Ovary (tissue), 10 donors: ENCODE measurements at regions of chr5 and their contacts with region 1.

Region 1: GRCh38 chr5:171418316-171418981 is 998 bp upstream of the FGF18 start:
- DNase-seq: peak; percentile 72 to 88 (median 76)
- H3K4me3 ChIP-seq: peak overlapping the region; percentile 25
- H3K27ac ChIP-seq: no peak overlapping the region
- H3K4me1 ChIP-seq: peaks cover 6% of the 10 kb centered on the region
- H3K27me3 ChIP-seq: peaks cover 2% of the 10 kb centered on the region
- CTCF ChIP-seq: peak; percentile 68 to 95 (median 91)
- EP300 ChIP-seq: no peak
- POLR2A ChIP-seq: no peak

Region 2: DNA sequence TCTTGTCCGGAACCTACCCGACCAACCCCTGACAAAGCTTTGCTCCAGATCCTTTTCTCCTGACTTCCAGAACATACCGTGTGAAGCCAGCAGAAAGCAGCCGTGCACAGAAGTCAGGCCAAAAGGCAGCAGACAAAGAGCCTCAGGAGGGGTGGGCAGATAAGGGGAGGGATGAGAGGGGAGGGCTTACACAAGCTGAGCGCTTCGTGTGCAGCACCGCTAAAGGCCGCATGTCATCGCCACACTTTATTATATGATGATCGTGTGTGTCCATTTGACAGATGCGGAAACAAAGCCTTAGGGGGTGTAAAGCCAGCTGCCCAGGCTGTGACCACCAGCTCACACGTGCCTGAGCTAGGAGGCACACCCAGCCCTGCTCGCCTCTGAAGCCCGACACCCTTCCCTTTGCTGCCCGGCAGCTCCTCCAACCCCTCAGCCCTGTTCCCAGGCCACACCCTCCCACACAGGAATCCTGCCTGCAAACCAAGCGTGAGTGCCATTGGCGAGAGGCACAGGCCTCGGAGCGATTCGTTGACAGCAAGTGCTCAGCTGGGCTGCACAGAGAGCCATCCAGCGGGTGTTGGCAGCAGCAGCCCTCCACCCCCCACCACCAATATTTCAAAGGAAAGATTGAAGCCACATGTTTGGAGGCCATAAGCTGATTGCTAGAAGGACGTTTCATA is 196.7 kb after region 1 on chr5:
- intact Hi-C with region 1: loop called in 1 of 4 experiments (anchors 10 kb)
- DNase-seq: no peak
- H3K4me3 ChIP-seq: no peak overlapping the region
- H3K27ac ChIP-seq: no peak overlapping the region
- H3K4me1 ChIP-seq: no peaks in the 10 kb centered on the region
- H3K27me3 ChIP-seq: no peaks in the 10 kb centered on the region
- CTCF ChIP-seq: no peak
- EP300 ChIP-seq: no peak
- POLR2A ChIP-seq: no peak

Region 3: DNA sequence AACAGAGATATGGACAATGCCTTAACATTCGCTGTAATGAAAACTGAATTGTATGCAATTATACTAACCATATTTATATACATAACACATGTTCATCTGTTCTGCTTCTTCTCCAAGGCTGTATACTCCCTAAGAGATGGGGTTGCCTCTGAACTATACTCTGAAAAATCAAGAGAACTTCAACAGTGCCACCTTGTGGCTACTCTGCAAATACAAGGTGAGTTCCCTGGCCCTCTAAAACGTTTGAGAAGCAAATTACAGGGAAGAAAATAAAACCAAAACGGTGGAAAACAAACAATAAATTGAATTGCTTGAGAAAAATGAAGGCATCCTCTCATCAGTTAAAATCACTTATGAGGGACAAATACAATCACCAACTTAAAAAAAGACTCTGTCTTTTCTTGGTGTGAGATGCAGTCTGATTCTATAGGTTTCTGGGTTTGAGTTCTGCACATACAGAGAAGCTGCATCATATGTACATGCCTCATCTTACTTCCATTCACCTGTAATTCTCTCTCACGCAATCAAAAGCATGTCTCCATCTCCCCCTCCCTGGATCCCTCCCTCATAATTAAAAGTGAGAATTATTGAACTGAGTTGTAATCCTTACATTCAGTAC is 489.4 kb after region 1 on chr5:
- intact Hi-C with region 1: loop called in 3 of 4 experiments (anchors 5 kb)
- DNase-seq: peak in 2 of 5 donors; percentile 30 to 40
- H3K4me3 ChIP-seq: no peak overlapping the region
- H3K27ac ChIP-seq: no peak overlapping the region
- H3K4me1 ChIP-seq: no peaks in the 10 kb centered on the region
- H3K27me3 ChIP-seq: no peaks in the 10 kb centered on the region
- CTCF ChIP-seq: peak; percentile 36 to 66 (median 63)
- EP300 ChIP-seq: no peak
- POLR2A ChIP-seq: no peak

Region 4: GRCh38 chr5:172188033-172188892 is 769.8 kb after region 1 on chr5 and contains the start of gene STK10:
- intact Hi-C with region 1: loop called in 1 of 4 experiments (anchors 10 kb)
- DNase-seq: peak; percentile 85 to 91 (median 89)
- H3K4me3 ChIP-seq: peak within 1 kb of the TSS; percentile 91
- H3K27ac ChIP-seq: peak within 1 kb of the TSS; percentile 70 to 73
- H3K4me1 ChIP-seq: no peaks in the 10 kb centered on the region
- H3K27me3 ChIP-seq: no peaks in the 10 kb centered on the region
- CTCF ChIP-seq: peak; percentile 40 to 80 (median 74)
- EP300 ChIP-seq: no peak
- POLR2A ChIP-seq: no peak
- total RNA-seq, gene STK10: 7.6 to 15.5 (median 10.0) TPM